ENCODE measurements at regions of chr6 and their contacts with region 1.

Region 1: GRCh38 chr6:108835218-108835850 is 12.9 kb upstream of the ARMC2 start:
- DNase-seq: peak; percentile 96
- H3K4me3 ChIP-seq: no peak overlapping the region
- H3K27ac ChIP-seq: no peak overlapping the region
- H3K4me1 ChIP-seq: peaks cover 9 to 38% (median 26%) of the 10 kb centered on the region in 6 donors
- H3K27me3 ChIP-seq: no peaks in the 10 kb centered on the region
- CTCF ChIP-seq: peak; percentile 93 to 99 (median 96)
- POLR2A ChIP-seq: no peak

Region 2: DNA sequence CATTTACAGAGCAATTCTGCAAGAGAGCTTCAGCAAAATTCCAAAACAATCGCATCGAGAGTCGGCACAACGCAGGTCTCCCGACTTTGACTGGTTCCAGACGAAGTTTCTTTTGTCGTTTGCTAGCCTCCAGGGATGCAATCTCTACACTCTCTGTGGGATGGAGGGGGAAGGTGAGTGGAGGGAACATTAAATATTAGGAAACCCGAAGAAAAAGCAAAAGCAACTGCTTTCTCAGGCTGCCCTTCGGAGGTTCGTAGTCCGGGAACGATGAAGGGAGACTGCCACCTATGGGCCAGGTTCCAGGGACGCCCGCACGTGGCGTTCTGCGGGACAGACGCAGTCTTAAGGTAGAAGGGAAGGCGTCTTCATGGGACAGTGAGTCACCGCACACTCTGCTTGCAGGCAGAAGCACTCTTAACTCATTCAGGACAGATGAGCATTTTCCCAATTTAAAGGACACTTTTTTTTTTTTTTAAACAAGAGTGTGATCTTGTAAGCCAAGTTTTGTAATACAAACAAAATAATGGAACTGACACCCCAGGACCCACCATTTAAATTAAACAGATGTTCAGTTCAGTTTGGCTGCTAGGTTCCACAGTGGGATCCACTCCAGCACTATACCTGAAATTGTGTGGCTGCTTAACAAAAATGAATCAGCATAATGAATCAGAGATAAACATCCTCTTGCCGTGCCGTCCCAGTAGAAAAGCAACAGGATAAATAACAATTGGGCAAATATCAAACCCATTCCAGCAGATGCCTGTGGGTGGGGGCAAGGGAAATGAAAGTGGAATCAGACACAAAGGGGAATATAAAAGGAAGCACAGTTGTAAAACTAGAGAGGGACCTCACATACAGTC is 52.9 kb before region 1 on chr6:
- intact Hi-C with region 1: loop called (anchors 10 kb)
- DNase-seq: peak; percentile 95
- H3K4me3 ChIP-seq: peak overlapping the region; percentile 24 to 68 (median 38)
- H3K27ac ChIP-seq: peak overlapping the region in 5 of 8 donors; percentile 17 to 54 (median 37)
- H3K4me1 ChIP-seq: peaks cover 10 to 47% (median 30%) of the 10 kb centered on the region in 6 donors
- H3K27me3 ChIP-seq: no peaks in the 10 kb centered on the region
- CTCF ChIP-seq: peak; percentile 66 to 91 (median 83)
- POLR2A ChIP-seq: no peak